CD14-positive monocyte (primary cell): ENCODE measurements at regions of chr17 and their contacts with region 1.

Region 1: GRCh38 chr17:82767041-82767754 is 15.3 kb downstream of the TBCD start:
- DNase-seq: peak in 2 of 3 donors; percentile 22 to 44
- H3K4me3 ChIP-seq: no peak overlapping the region
- H3K4me3 Mint-ChIP-seq: no peak overlapping the region
- H3K27ac ChIP-seq: no peak overlapping the region
- H3K27ac Mint-ChIP-seq: peak overlapping the region in 1 of 7 donors; percentile 21
- H3K4me1 ChIP-seq: no peaks in the 10 kb centered on the region
- H3K4me1 Mint-ChIP-seq: peaks cover 3% of the 10 kb centered on the region
- H3K27me3 ChIP-seq: no peaks in the 10 kb centered on the region
- H3K27me3 Mint-ChIP-seq: peaks cover 0 to 1% (median 0%) of the 10 kb centered on the region in 3 donors
- CTCF ChIP-seq: peak; percentile 69

Region 2: DNA sequence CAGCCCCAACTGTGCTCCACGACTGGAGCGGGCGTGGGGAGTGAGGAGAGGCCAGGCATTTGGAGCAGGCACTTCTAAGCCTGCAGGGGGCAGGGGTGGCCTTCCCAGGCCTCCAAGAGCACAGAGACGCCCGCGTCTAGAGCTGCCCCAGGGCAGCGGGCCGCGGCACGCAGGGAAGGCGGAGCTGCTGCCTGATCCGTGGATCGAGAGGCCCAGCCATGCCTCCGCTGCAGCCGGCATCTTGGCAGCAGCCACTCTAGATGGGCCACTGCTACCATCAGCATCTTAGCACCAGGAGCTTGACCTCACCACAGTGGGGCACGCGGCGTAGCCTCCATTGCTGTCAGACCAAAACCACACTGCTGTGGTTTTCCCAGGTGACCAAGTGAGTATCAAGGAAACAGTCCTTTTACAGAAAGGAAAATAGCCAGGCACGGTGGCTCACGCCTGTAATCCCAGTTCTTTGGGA is 98.5 kb before region 1 on chr17:
- intact Hi-C with region 1: loop called (anchors 2 to 5 kb)
- DNase-seq: peak; percentile 46 to 63 (median 59)
- H3K4me3 ChIP-seq: peak overlapping the region in 1 of 3 experiments; percentile 48
- H3K4me3 Mint-ChIP-seq: peak overlapping the region; percentile 62 to 85
- H3K27ac ChIP-seq: no peak overlapping the region
- H3K27ac Mint-ChIP-seq: no peak overlapping the region
- H3K4me1 ChIP-seq: peaks cover 3 to 8% of the 10 kb centered on the region in 2 donors
- H3K4me1 Mint-ChIP-seq: peaks cover 9% of the 10 kb centered on the region
- H3K27me3 ChIP-seq: no peaks in the 10 kb centered on the region
- H3K27me3 Mint-ChIP-seq: peaks cover 0 to 6% (median 0%) of the 10 kb centered on the region in 3 donors
- CTCF ChIP-seq: peak; percentile 70